Posterior vena cava (tissue), 2 donors: ENCODE measurements at regions of chr7 and their contacts with region 1.

Region 1: DNA sequence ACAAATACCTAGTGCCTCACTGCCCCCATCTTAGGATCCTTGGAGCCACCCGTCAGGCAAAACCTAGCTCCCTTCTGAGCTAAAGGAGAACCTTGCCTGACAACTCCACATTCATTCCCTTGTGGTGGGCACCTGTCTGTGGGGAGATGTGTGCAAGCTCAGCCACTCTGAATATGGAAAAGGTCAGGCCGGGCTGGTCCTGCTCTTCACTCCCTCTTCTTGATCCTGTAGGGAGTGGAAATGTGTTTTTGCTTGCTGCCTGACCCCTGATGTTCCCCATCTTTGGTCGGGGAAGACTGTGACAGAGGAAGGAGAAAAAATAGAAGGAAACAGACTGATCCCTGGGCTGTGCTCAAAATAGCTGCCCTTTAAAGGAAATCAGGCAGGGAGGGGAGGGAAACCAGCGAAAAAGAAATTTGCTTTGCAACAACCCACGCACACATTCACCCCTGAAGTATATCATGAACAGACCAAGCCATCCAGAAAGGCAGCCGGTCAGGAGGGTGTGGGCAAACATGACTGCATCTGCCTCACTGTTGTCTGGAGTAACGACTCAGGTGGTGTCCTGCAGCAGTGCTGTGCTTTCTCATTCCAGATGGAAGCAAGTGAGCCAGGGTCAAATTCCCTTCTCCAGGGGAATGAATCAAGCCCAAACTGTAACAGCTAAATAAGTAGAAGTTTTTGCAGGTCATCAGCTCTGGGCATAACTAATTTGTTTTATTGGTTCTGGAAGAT is 74.0 kb downstream of the SCRN1 start:
- DNase-seq: no peak

Region 2: GRCh38 chr7:29035044-29035740 is 880.5 kb before region 1 on chr7:
- intact Hi-C with region 1: loop called in 1 of 2 experiments (anchors 5 kb)
- DNase-seq: no peak

Region 3: GRCh38 chr7:29749701-29750321 is 165.8 kb before region 1 on chr7:
- intact Hi-C with region 1: loop called (anchors 5 to 10 kb)
- DNase-seq: no peak

Region 4: GRCh38 chr7:29833929-29834328 is 81.7 kb before region 1 on chr7:
- intact Hi-C with region 1: loop called in 1 of 2 experiments (anchors 5 kb)
- DNase-seq: no peak